ENCODE measurements at regions of chr20 and their contacts with region 1.

Region 1: DNA sequence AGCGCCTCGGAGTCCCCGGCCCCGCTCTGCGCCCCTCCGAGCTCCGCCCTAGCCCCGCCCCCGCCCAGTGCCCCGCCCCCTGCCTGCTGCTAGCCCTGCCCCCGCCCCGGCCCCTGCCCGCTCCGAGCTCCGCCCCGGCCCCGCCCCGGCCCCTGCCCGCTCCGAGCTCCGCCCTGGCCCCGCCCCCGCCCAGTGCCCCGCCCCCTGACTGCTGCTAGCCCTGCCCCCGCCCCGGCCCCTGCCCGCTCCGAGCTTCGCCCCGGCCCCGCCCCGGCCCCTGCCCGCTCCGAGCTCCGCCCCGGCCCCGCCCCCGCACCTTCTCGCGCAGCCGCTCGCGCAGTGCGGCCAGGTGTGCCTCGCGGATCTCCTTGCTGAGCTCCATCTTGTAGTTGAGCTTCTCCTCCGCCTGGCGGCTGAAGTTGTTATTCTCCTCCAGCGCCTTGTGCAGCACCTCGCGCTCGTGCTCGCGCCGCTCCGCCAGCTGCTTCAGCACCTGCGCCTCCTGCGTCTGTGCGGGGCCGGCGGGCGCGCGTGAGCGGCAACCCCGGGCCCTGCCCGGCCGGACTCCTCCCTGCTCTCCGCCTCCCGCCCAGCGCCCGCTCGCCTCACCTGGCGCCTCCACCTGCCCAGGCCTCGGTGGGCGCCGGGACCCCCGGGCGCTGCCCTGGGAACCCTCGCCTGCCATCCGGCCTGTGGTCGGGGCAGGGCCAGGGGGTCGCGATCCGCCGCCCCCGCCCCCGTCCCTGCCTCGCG is 11.3 kb downstream of the STMN3 start:
- DNase-seq: peak; percentile 92
- ATAC-seq: peak; percentile 72
- H3K4me3 ChIP-seq: peak overlapping the region; percentile 71
- H3K27ac ChIP-seq: peak overlapping the region; percentile 41; the same call in 1 of the 2 replicates
- H3K4me1 ChIP-seq: peaks cover 6% of the 10 kb centered on the region
- H3K27me3 ChIP-seq: no peaks in the 10 kb centered on the region
- CTCF ChIP-seq: peak; percentile 49

Region 2: DNA sequence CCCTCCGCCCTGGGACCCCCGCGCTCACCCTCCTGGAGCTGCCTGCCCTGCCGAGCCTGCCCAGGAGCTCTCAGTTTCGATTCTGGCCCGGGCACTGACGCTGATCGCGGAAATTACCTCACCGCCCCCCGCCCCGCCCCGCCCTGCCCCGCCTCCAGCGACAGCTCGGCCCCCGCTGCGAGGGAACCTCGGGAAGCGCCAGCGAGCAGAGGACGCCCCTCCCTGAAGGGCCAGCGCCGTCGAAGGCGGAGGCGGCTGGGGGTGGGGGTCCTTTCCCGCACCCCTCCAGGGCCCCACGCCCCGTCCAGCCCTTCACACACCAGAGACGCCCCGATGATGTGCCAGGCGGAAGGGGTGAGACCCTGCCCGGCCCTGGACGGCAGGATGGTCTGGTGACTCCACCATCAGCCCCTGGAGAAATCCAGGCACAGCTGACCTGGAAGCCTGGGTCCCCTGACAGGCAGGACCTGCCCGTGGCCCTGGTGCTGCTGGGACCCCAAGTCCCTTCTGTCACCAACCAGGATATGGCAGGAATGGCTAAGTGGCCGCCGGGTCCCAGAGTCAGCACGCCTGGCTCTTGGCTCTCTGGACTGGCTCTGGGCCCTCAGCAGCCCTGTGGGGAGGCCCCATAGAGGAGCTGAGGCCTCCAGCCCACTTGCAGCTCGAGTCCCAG is 67.7 kb before region 1 on chr20 and contains the start of gene HELZ2:
- CTCF ChIA-PET with region 1: no interaction called
- POLR2A ChIA-PET with region 1: interaction called, 15 read pairs
- intact Hi-C with region 1: no loop called
- DNase-seq: peak; percentile 58
- ATAC-seq: peak; percentile 85
- H3K4me3 ChIP-seq: peak within 1 kb of the TSS; percentile 77
- H3K27ac ChIP-seq: no peak within 1 kb of the TSS
- H3K4me1 ChIP-seq: peaks cover 18% of the 10 kb centered on the region
- H3K27me3 ChIP-seq: no peaks in the 10 kb centered on the region
- CTCF ChIP-seq: no peak
- total RNA-seq, gene HELZ2: 33.4 and 77.2 TPM in 2 replicates

Region 3: GRCh38 chr20:63580796-63581461 is 61.0 kb before region 1 on chr20:
- CTCF ChIA-PET with region 1: interaction called, 4 read pairs
- POLR2A ChIA-PET with region 1: no interaction called
- intact Hi-C with region 1: loop called (anchors 5 kb)
- DNase-seq: peak; percentile 86
- ATAC-seq: peak; percentile 95
- H3K4me3 ChIP-seq: no peak overlapping the region
- H3K27ac ChIP-seq: peak overlapping the region; percentile 7; the same call in 1 of the 2 replicates
- H3K4me1 ChIP-seq: peaks cover 5% of the 10 kb centered on the region
- H3K27me3 ChIP-seq: no peaks in the 10 kb centered on the region
- CTCF ChIP-seq: peak; percentile 85

Region 4: DNA sequence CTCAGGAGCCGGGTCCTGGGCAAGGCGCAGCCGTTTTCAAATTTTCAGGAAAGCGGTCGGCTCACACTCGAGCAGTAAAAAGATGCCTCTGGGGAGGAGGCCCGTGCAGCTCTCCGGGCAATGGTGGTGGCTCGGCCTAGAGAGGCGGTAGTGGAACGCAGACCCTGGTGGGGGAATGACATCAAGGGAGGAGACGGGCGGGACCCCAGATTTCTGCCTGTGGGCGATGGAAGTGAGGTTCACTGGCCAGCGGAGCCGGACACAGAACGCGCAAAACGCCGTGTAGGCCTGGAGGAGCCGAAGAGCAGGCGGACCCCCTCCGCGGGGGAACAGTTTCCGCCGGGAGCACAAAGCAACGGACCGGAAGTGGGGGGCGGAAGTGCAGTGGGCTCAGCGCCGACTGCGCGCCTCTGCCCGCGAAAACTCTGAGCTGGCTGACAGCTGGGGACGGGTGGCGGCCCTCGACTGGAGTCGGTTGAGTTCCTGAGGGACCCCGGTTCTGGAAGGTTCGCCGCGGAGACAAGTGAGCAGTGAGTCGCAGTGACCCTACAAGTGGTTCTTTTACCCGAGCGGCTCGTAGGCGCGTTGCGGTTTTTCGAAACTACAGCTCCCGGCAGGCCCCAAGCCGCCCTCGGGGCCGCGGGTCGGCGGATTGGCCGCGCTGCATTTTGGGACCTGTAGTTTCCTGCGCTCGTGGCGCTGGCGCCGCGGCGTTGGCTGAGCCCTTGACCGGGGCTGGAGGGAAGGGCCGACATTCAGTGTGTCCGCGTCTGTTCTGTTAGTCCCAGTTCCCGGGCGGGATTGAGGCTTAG is 16.2 kb after region 1 on chr20 and contains the start of gene RTEL1:
- CTCF ChIA-PET with region 1: interaction called, 4 read pairs
- POLR2A ChIA-PET with region 1: interaction called, 21 read pairs
- intact Hi-C with region 1: no loop called
- DNase-seq: peak; percentile 93
- ATAC-seq: peak; percentile 97
- H3K4me3 ChIP-seq: peak within 1 kb of the TSS; percentile 91
- H3K27ac ChIP-seq: peak within 1 kb of the TSS; percentile 41
- H3K4me1 ChIP-seq: peaks cover 9% of the 10 kb centered on the region; the same call in 1 of the 2 replicates
- H3K27me3 ChIP-seq: no peaks in the 10 kb centered on the region
- CTCF ChIP-seq: no peak
- total RNA-seq, gene RTEL1: 43.0 and 56.2 TPM in 2 replicates

Region 5: GRCh38 chr20:63864847-63865640 is 223.1 kb after region 1 on chr20 and contains the start of gene TPD52L2:
- CTCF ChIA-PET with region 1: interaction called, 3 read pairs
- POLR2A ChIA-PET with region 1: interaction called, 10 read pairs
- intact Hi-C with region 1: no loop called
- DNase-seq: peak; percentile 99
- ATAC-seq: peak; percentile 86
- H3K4me3 ChIP-seq: peak within 1 kb of the TSS; percentile 90
- H3K27ac ChIP-seq: peak within 1 kb of the TSS; percentile 77
- H3K4me1 ChIP-seq: peaks cover 10% of the 10 kb centered on the region
- H3K27me3 ChIP-seq: no peaks in the 10 kb centered on the region
- CTCF ChIP-seq: no peak
- total RNA-seq, gene TPD52L2: 147 and 167 TPM in 2 replicates